CD4-positive, alpha-beta memory T cell (primary cell): ENCODE measurements at regions of chr21 and their contacts with region 1.

Region 1: DNA sequence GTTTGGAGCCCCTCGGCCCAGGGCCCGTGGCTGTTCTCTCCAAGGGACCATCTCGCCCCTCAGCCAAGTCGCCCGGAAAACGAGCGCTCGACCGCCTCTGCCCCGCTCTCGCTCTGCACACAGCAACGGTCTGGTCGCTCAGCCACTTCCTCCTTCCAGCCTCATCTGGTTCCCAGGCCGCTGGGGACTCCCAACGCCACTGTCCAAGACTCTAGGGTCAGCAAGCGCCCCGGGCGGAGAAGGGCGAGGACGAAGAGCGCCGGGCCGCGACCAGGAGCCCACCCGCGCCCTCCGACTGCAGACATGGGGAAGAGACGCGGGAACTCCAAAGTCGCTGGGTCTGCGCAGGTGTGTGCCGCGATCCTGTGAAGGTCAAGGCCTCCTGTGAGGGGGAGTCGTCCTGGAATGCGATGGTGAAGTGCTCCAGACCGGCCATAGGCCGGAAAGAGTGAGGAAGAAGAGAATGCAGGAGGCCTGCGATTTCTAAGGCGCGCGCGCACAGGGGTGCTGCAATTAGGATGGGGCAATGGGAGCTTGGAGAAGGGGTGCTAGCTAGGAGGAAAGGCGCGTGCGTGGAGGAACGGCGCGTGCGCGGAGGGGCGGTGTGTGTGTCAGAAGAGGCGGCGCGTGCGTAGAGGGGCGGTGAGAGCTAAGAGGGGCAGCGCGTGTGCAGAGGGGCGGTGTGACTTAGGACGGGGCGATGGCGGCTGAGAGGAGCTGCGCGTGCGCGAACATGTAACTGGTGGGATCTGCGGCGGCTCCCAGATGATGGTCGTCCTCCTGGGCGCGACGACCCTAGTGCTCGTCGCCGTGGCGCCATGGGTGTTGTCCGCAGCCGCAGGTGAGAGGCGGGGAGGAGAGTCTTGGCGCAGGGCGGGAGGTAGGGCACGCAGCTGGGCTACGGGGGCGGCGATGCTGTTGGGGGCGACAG is at the start of gene IFNAR1:
- DNase-seq: peak; percentile 94 to 99 (median 98)
- H3K4me3 ChIP-seq: peak within 1 kb of the TSS; percentile 90 to 99
- H3K4me3 Mint-ChIP-seq: no peak within 1 kb of the TSS
- H3K27ac ChIP-seq: peak within 1 kb of the TSS; percentile 95
- H3K27ac Mint-ChIP-seq: no peak within 1 kb of the TSS
- H3K4me1 ChIP-seq: peaks cover 39% of the 10 kb centered on the region
- H3K4me1 Mint-ChIP-seq: peaks cover 18 to 32% (median 26%) of the 10 kb centered on the region in 4 donors
- H3K27me3 ChIP-seq: no peaks in the 10 kb centered on the region
- H3K27me3 Mint-ChIP-seq: no peaks in the 10 kb centered on the region
- total RNA-seq, gene IFNAR1: 60.1 to 62.5 TPM

Region 2: GRCh38 chr21:33238565-33239255 is 85.8 kb before region 1 on chr21:
- CTCF ChIA-PET with region 1: no interaction called
- POLR2A ChIA-PET with region 1: interaction called, 13 read pairs
- intact Hi-C with region 1: loop called (anchors 5 kb)
- DNase-seq: peak in 4 of 5 donors; percentile 22 to 43 (median 24)
- H3K4me3 ChIP-seq: peak overlapping the region in 1 of 2 donors; percentile 40
- H3K4me3 Mint-ChIP-seq: peak overlapping the region; percentile 64 to 79 (median 70)
- H3K27ac ChIP-seq: peak overlapping the region; percentile 60
- H3K27ac Mint-ChIP-seq: peak overlapping the region; percentile 65 to 94 (median 88)
- H3K4me1 ChIP-seq: peaks cover 93% of the 10 kb centered on the region
- H3K4me1 Mint-ChIP-seq: peaks cover 66 to 92% (median 78%) of the 10 kb centered on the region in 4 donors
- H3K27me3 ChIP-seq: no peaks in the 10 kb centered on the region
- H3K27me3 Mint-ChIP-seq: no peaks in the 10 kb centered on the region

Region 3: GRCh38 chr21:33299181-33299752 is 25.3 kb before region 1 on chr21:
- CTCF ChIA-PET with region 1: interaction called, 5 read pairs
- POLR2A ChIA-PET with region 1: interaction called, 56 read pairs
- intact Hi-C with region 1: no loop called
- DNase-seq: peak; percentile 39 to 58 (median 41)
- H3K4me3 ChIP-seq: peak overlapping the region in 1 of 2 donors; percentile 19
- H3K4me3 Mint-ChIP-seq: peak overlapping the region; percentile 48 to 88 (median 70)
- H3K27ac ChIP-seq: peak overlapping the region; percentile 10
- H3K27ac Mint-ChIP-seq: peak overlapping the region; percentile 69 to 95 (median 84)
- H3K4me1 ChIP-seq: peaks cover 37% of the 10 kb centered on the region
- H3K4me1 Mint-ChIP-seq: peaks cover 33 to 64% (median 44%) of the 10 kb centered on the region in 4 donors
- H3K27me3 ChIP-seq: no peaks in the 10 kb centered on the region
- H3K27me3 Mint-ChIP-seq: no peaks in the 10 kb centered on the region

Region 4: DNA sequence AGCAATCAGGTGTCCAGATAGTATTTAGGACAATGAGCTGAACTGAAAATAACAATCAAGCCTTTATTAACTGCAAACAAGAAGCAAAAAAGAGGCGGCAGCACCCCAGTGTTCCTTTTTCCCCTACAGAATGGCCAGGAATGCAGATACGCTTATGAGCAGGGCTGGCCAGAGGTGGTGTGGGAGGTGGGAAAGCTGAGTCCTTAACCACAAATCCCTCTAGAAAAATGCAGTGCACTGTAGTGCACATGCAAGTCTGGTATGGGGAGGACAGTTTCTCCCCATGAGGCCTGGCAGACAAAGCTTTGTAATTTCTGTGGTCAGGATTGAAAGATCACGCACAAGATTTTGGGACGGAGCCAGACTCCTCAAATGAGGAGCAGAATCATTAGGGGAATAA is 10.4 kb before region 1 on chr21:
- CTCF ChIA-PET with region 1: interaction called, 4 read pairs
- POLR2A ChIA-PET with region 1: interaction called, 18 read pairs
- intact Hi-C with region 1: no loop called
- DNase-seq: no peak
- H3K4me3 ChIP-seq: no peak overlapping the region
- H3K4me3 Mint-ChIP-seq: no peak overlapping the region
- H3K27ac ChIP-seq: no peak overlapping the region
- H3K27ac Mint-ChIP-seq: no peak overlapping the region
- H3K4me1 ChIP-seq: peaks cover under 1% of the 10 kb centered on the region
- H3K4me1 Mint-ChIP-seq: peaks cover 2 to 6% (median 3%) of the 10 kb centered on the region in 4 donors
- H3K27me3 ChIP-seq: no peaks in the 10 kb centered on the region
- H3K27me3 Mint-ChIP-seq: peaks cover 0 to 5% of the 10 kb centered on the region in 2 donors

Region 5: GRCh38 chr21:33403779-33404585 is 79.4 kb after region 1 on chr21:
- CTCF ChIA-PET with region 1: no interaction called
- POLR2A ChIA-PET with region 1: interaction called, 12 read pairs
- intact Hi-C with region 1: no loop called
- DNase-seq: peak in 2 of 5 donors; percentile 17 to 20
- H3K4me3 ChIP-seq: peak overlapping the region; percentile 54 to 78
- H3K4me3 Mint-ChIP-seq: peak overlapping the region; percentile 93 to 98 (median 96)
- H3K27ac ChIP-seq: peak overlapping the region; percentile 58
- H3K27ac Mint-ChIP-seq: peak overlapping the region; percentile 83 to 98 (median 91)
- H3K4me1 ChIP-seq: peaks cover 31% of the 10 kb centered on the region
- H3K4me1 Mint-ChIP-seq: peaks cover 21 to 43% (median 33%) of the 10 kb centered on the region in 4 donors
- H3K27me3 ChIP-seq: no peaks in the 10 kb centered on the region
- H3K27me3 Mint-ChIP-seq: peaks cover 0 to 2% of the 10 kb centered on the region in 2 donors

Region 6: DNA sequence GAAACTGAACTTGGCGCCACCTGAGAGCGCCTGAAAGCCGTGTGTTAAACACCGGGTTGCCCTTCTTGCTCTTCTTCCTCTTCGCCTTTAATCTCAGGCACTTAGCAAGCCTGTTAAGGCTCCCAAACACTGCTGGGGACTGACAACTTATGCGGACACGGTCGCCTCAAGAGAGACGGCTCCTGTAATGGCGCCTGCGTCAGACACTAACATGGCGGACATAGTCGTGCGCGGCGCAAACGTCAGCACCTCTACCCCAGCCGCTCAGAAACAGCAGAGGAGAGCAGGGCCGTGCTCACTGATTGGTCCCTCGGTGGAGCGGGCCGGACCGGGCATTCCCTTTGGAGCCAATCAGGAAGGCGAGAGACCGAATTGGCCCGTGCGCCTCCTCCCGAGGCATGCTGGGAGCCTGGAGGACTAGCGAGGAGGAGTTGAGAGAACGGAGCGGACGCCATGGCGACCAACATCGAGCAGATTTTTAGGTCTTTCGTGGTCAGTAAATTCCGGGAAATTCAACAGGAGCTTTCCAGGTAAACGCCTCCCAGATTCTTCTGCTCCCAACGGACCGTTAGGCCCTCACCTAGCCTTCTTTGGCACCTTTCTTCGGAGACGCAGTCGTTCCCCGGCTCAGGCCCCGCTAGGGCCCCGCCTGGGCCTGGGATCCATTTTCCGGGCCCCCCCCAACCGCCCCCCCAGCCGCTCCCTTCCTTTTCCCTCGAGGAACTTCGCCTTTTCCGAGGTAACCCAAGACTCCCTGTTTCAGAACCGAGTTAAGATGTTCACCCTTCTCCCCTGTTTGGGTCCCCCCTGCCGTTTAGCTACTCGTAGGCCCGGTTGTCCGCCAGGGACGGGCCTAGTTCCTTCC is 218.3 kb after region 1 on chr21 and contains the start of gene SON:
- CTCF ChIA-PET with region 1: no interaction called
- POLR2A ChIA-PET with region 1: interaction called, 10 read pairs
- intact Hi-C with region 1: loop called (anchors 2 kb)
- DNase-seq: peak; percentile 96 to 99 (median 98)
- H3K4me3 ChIP-seq: peak within 1 kb of the TSS; percentile 87 to 96
- H3K4me3 Mint-ChIP-seq: peak within 1 kb of the TSS; percentile 96 to 100 (median 98)
- H3K27ac ChIP-seq: peak within 1 kb of the TSS; percentile 99
- H3K27ac Mint-ChIP-seq: peak within 1 kb of the TSS; percentile 98 to 100 (median 100)
- H3K4me1 ChIP-seq: peaks cover 52% of the 10 kb centered on the region
- H3K4me1 Mint-ChIP-seq: peaks cover 24 to 57% (median 36%) of the 10 kb centered on the region in 4 donors
- H3K27me3 ChIP-seq: no peaks in the 10 kb centered on the region
- H3K27me3 Mint-ChIP-seq: no peaks in the 10 kb centered on the region
- total RNA-seq, gene SON: 436 to 454 TPM